ENCODE measurements at regions of chr9 and their contacts with region 1.

Region 1: DNA sequence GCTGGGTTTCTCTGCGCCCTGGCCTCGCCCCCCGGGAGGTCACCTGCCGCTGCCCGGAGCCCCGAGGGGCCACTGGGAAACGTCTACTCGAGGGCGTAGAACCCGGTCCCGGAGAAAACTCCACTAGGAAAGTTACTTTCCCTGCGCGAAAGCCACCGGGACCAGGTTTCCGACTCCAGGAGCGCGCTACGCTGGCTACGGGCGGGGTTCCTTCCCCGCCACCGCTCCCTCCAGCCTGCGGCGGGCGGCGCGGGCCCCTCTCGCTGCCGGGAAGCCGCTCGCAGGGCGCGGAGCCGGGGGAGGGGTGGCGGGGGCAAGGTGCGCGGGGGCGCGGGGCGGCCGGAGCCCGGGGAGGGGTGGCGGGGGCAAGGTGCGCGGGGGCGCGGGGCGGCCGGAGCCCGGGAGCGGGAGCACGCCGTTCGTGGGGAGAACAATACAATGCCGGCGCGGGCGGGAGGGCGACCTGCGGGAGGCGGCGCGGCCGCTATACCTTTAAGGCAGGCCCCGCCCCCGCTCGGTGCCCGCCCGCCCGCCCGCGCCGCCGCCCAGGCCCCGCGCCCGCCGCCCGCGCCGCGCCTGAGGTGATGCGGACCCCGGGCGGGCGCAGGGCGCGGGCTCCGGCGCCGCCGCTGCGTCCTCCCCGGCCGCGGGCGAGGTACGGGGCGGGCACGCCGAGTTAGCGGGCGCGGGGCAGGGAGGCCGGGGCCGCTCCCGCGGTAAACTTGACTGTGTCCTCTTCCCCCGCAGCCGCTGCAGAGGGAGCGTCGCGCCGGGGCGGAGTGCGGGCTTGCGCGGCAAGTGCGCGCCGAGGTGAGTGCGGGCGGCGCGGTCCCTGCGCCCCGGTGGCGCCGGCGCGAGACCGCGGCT is 278.1 kb downstream of the AOPEP start:
- DNase-seq: peak; percentile 83
- H3K4me3 ChIP-seq: peak overlapping the region; percentile 85
- H3K27ac ChIP-seq: peak overlapping the region; percentile 87
- H3K4me1 ChIP-seq: peaks cover 30% of the 10 kb centered on the region
- H3K27me3 ChIP-seq: no peaks in the 10 kb centered on the region

Region 2: GRCh38 chr9:94672811-94673487 is 331.7 kb before region 1 on chr9:
- in situ Hi-C with region 1: no loop called
- DNase-seq: peak; percentile 79
- H3K4me3 ChIP-seq: no peak overlapping the region
- H3K27ac ChIP-seq: peak overlapping the region; percentile 53
- H3K4me1 ChIP-seq: peaks cover 30% of the 10 kb centered on the region
- H3K27me3 ChIP-seq: no peaks in the 10 kb centered on the region

Region 3: GRCh38 chr9:94783102-94783664 is 221.5 kb before region 1 on chr9:
- in situ Hi-C with region 1: loop called (anchors 25 kb)
- DNase-seq: peak; percentile 94
- H3K4me3 ChIP-seq: peak overlapping the region; percentile 55
- H3K27ac ChIP-seq: peak overlapping the region; percentile 86
- H3K4me1 ChIP-seq: peaks cover 34% of the 10 kb centered on the region
- H3K27me3 ChIP-seq: no peaks in the 10 kb centered on the region

Region 4: DNA sequence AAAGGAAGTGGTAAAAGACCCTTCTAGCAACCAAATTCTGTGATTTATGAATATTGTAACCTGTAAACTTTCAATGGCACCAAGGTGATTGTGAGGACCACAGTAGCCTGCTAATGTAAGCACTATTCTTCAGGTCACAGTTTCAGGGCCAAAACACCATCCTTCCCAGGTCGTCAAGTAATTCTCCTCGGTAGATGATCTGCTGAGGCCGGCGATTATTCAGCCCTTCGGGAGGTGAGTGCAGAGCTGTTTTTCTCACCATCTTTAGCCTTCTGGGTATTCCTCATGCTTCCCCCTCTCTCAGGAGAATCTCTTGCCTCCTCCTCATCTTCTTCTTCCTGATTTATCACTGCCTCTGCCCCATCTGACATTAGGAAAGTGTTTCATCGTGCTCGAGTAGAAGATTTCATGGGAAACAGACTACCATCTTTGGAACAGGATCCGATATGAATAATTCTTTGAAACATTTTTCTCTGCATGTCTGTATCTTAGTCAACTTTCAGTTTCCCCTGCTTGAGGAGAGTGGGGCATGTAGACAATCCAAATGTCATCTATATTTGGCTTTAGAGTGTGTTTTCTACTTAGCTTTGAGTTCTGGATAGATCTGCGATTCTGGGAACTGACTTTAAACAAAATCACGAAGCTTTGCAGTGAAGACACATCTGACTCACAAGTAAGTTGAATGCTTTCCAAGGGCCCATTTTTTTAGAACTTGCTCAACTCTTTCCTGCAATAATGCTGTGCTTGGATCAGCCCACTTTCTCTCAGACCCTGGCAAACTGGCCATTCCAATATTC is 104.2 kb before region 1 on chr9:
- in situ Hi-C with region 1: no loop called
- DNase-seq: peak; percentile 94
- H3K4me3 ChIP-seq: peak overlapping the region; percentile 59
- H3K27ac ChIP-seq: peak overlapping the region; percentile 94
- H3K4me1 ChIP-seq: peaks cover 62% of the 10 kb centered on the region
- H3K27me3 ChIP-seq: no peaks in the 10 kb centered on the region